ENCODE measurements at regions of chr21 and their contacts with region 1.

Region 1: GRCh38 chr21:43646550-43647260 is 12.6 kb downstream of the HSF2BP start:
- DNase-seq: peak; percentile 92
- ATAC-seq: peak; percentile 98
- H3K4me3 Mint-ChIP-seq: peak overlapping the region; percentile 5
- H3K27ac Mint-ChIP-seq: no peak overlapping the region
- H3K4me1 Mint-ChIP-seq: peaks cover 20% of the 10 kb centered on the region
- H3K27me3 Mint-ChIP-seq: peaks cover 2% of the 10 kb centered on the region

Region 2: DNA sequence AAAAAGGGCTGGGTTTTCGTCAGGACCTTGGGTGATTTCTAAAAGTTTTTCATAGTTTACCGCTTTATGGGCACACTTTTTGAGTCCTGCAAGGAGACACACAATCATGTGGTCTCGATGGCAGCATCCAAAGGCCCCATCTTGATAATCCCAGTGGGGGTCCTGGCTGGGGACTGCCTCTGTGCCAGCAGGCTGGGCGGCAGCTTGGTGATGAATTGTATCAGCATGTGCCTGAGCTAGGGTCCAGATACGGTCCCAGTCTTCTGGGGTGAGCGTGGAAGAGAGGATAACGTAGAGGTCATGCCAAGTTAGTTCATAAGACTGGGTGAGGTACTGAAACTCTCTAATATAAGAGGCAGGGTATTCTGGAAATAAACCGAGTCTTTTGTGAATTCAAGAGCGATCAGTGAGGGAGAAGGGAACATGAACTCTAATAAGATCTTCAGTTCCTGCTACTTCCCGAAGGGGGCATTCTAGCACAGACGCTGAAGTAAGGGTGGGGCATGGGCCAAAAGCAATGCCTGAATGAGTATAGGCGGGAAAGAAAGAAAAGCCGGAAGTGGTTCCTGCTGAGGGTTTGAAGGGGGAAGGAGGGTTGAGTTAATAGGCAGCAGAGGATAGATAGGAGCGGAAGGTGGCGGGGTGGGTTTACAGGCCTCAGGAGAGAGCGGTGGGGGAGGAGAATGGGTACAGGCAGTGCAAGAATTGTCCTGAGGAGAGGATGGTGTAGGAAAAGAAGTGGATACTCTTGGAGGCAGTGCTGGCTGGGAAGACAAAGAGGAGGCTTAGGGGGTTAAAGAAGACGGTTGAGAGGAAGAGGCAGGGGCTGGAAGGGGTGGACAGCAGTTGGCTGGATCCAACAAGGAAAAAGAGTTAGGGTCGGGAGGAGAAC is 722.9 kb before region 1 on chr21:
- CTCF ChIA-PET with region 1: no interaction called
- POLR2A ChIA-PET with region 1: no interaction called
- intact Hi-C with region 1: loop called (anchors 2 to 5 kb)
- DNase-seq: peak; percentile 87
- ATAC-seq: peak; percentile 99
- H3K4me3 Mint-ChIP-seq: peak overlapping the region; percentile 52
- H3K27ac Mint-ChIP-seq: peak overlapping the region; percentile 79
- H3K4me1 Mint-ChIP-seq: peaks cover 24% of the 10 kb centered on the region
- H3K27me3 Mint-ChIP-seq: no peaks in the 10 kb centered on the region

Region 3: GRCh38 chr21:43318841-43319781 is 327.6 kb before region 1 on chr21:
- CTCF ChIA-PET with region 1: interaction called, 4 read pairs
- POLR2A ChIA-PET with region 1: no interaction called
- intact Hi-C with region 1: loop called (anchors 5 to 10 kb)
- DNase-seq: no peak
- ATAC-seq: no peak
- H3K4me3 Mint-ChIP-seq: no peak overlapping the region
- H3K27ac Mint-ChIP-seq: no peak overlapping the region
- H3K4me1 Mint-ChIP-seq: no peaks in the 10 kb centered on the region
- H3K27me3 Mint-ChIP-seq: peaks cover 7% of the 10 kb centered on the region

Region 4: DNA sequence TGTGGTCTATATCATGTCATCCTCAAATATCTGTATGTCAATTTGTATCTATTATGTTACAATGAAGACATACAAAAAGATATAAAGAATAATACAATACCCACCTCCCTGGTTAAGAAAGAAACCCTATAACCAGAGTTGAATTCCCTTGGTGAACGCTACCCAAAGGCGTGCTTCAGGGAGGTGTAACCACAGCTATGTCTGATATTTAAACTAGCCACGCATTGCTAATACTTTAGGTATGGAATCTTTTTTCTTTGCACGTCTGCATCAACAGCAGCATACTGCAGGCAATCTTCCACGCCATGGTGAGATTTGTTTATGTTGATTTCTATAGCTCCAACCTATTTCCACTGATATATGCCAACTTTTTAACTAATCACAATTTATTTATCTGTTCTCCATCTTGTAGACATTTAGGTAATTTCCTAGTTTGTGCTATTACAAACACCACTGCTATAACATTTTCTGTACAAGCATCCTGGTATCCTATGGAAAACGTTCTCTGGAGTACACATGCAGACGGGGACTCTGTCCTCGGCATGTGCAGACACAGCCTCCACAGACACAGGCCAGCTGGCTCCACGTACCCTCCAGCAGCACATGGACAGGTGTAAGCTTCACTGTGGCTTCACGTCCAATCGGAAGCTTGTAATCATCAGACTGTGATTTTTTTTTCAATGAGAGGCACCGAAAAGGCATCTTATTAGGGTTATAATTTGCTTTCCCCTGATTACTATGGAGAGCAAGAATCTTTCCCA is 45.9 kb before region 1 on chr21:
- CTCF ChIA-PET with region 1: no interaction called
- POLR2A ChIA-PET with region 1: no interaction called
- intact Hi-C with region 1: loop called in 1 of 2 experiments (anchors 5 kb)
- DNase-seq: no peak
- ATAC-seq: no peak
- H3K4me3 Mint-ChIP-seq: no peak overlapping the region
- H3K27ac Mint-ChIP-seq: no peak overlapping the region
- H3K4me1 Mint-ChIP-seq: peaks cover 2% of the 10 kb centered on the region
- H3K27me3 Mint-ChIP-seq: no peaks in the 10 kb centered on the region

Region 5: GRCh38 chr21:43611598-43612369 is 34.9 kb before region 1 on chr21:
- CTCF ChIA-PET with region 1: interaction called, 4 read pairs
- POLR2A ChIA-PET with region 1: no interaction called
- intact Hi-C with region 1: loop called in 1 of 2 experiments (anchors 5 kb)
- DNase-seq: peak; percentile 47
- ATAC-seq: no peak
- H3K4me3 Mint-ChIP-seq: no peak overlapping the region
- H3K27ac Mint-ChIP-seq: no peak overlapping the region
- H3K4me1 Mint-ChIP-seq: peaks cover 4% of the 10 kb centered on the region
- H3K27me3 Mint-ChIP-seq: no peaks in the 10 kb centered on the region

Region 6: GRCh38 chr21:43634618-43635017 is 12.1 kb before region 1 on chr21:
- CTCF ChIA-PET with region 1: interaction called, 9 read pairs
- POLR2A ChIA-PET with region 1: no interaction called
- intact Hi-C with region 1: loop called in 1 of 2 experiments (anchors 2 kb)
- DNase-seq: no peak
- ATAC-seq: no peak
- H3K4me3 Mint-ChIP-seq: no peak overlapping the region
- H3K27ac Mint-ChIP-seq: no peak overlapping the region
- H3K4me1 Mint-ChIP-seq: peaks cover 8% of the 10 kb centered on the region
- H3K27me3 Mint-ChIP-seq: peaks cover 2% of the 10 kb centered on the region

Region 7: GRCh38 chr21:43758111-43758641 is 111.5 kb after region 1 on chr21:
- CTCF ChIA-PET with region 1: no interaction called
- POLR2A ChIA-PET with region 1: no interaction called
- intact Hi-C with region 1: no loop called
- DNase-seq: no peak
- ATAC-seq: no peak
- H3K4me3 Mint-ChIP-seq: no peak overlapping the region
- H3K27ac Mint-ChIP-seq: no peak overlapping the region
- H3K4me1 Mint-ChIP-seq: no peaks in the 10 kb centered on the region
- H3K27me3 Mint-ChIP-seq: no peaks in the 10 kb centered on the region

Region 8: DNA sequence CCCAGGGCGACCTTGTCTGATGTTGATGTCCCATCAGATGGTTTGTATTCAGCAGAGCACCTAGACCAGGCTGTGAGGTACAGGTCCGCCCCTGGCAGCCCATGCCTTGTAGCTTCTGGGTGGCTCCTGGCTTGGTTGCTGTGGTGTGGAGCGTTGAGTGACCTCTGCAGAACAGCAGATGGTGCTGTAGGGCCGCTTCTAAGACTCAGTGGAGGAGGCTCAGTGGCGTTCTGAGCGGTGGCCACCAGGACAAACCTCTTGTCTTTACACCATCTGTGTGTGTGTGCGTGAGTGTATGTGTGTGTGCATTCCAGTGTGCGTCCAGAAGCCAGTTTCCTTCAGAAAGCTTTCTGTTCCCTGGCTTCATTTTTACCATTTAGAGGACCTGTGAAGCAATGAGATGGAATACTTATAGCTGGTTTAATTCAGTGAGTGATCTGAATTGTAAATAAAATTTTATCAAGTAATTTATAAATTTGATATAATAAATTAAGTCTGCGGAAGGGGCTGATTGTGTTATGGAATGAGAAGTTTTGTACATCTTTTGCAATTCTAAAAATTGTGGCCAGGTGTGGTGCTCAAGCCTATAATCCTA is 1493.7 kb after region 1 on chr21:
- CTCF ChIA-PET with region 1: no interaction called
- POLR2A ChIA-PET with region 1: no interaction called
- intact Hi-C with region 1: no loop called
- DNase-seq: peak; percentile 82
- ATAC-seq: peak; percentile 94
- H3K4me3 Mint-ChIP-seq: no peak overlapping the region
- H3K27ac Mint-ChIP-seq: no peak overlapping the region
- H3K4me1 Mint-ChIP-seq: peaks cover 9% of the 10 kb centered on the region
- H3K27me3 Mint-ChIP-seq: no peaks in the 10 kb centered on the region